WTC11 (cell line): ENCODE measurements at regions of chr21 and their contacts with region 1.

Region 1: GRCh38 chr21:37642493-37642892 is 273.8 kb downstream of the KCNJ6 start:
- DNase-seq: peak; percentile 47
- ATAC-seq: peak; percentile 90
- H3K4me3 Mint-ChIP-seq: no peak overlapping the region
- H3K27ac Mint-ChIP-seq: peak overlapping the region; percentile 20; the same call in 1 of the 2 replicates
- H3K4me1 Mint-ChIP-seq: peaks cover 22% of the 10 kb centered on the region
- H3K27me3 Mint-ChIP-seq: no peaks in the 10 kb centered on the region
- CTCF ChIP-seq: no peak

Region 2: DNA sequence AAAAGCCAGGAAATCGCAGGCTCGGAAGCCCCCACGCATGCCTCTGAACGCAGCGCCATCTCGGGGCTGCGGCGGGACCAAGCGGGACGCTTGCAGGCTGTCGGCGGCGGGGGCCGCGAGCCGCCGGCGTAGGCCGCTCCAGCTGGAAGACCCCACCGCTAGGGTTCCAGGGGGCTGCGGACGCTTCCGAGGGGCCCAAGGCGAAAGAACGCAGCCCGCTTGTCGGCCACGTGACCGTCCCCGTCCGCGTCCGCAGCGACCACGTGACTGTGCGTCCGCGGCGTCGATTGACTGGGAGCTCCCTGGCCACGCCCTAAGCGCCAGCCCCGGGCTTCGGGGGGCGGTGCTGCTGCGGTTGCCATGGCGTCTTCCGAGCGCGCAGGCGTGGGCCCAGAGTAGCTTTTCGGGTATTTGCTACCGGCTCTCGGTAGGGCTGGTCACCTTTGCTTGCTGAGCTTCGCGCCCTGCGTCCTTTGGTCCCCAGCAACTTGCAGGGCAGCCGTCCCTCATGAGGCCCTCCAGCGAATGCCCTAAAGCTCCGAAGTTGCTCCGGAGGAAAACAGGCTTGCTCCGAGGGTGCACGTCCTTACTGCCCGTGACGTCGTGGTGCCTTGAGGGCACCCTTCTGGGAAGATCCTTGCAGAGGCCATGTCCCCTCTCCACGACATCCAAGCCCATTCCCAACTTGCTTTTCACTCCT is 78.7 kb before region 1 on chr21:
- CTCF ChIA-PET with region 1: interaction called, 11 read pairs
- POLR2A ChIA-PET with region 1: interaction called, 3 read pairs
- DNase-seq: peak; percentile 90
- ATAC-seq: peak; percentile 94
- H3K4me3 Mint-ChIP-seq: peak overlapping the region; percentile 70
- H3K27ac Mint-ChIP-seq: peak overlapping the region; percentile 89
- H3K4me1 Mint-ChIP-seq: peaks cover 23% of the 10 kb centered on the region
- H3K27me3 Mint-ChIP-seq: peaks cover 26% of the 10 kb centered on the region
- CTCF ChIP-seq: no peak